Calu3 (cell line): ENCODE measurements at regions of chr6 and their contacts with region 1.

Region 1: DNA sequence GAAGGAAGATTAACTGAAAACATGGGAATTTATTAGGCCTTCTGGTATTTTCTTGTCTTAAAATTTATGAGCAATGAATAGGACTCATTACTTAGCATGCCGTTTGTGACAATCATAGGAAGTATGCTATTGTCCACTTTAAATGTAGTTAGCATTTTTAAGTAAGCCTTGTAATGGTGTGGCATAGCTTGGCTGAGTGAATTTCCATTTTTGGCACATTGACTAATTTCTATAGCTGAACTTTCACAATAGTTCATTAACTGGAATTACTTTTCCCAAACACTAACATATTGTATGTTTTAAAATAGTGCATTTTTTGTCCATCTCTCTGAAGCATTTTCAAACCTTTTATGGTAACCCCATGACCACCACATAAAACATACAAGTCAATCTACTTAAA is 15.7 kb downstream of the RSPO3 start:
- DNase-seq: no peak
- H3K4me3 Mint-ChIP-seq: no peak overlapping the region
- H3K27ac Mint-ChIP-seq: no peak overlapping the region
- H3K4me1 Mint-ChIP-seq: no peaks in the 10 kb centered on the region
- H3K27me3 Mint-ChIP-seq: peaks cover 2% of the 10 kb centered on the region
- CTCF ChIP-seq: no peak

Region 2: GRCh38 chr6:126682433-126682832 is 451.7 kb before region 1 on chr6:
- CTCF ChIA-PET with region 1: no interaction called
- intact Hi-C with region 1: no loop called
- DNase-seq: no peak
- H3K4me3 Mint-ChIP-seq: no peak overlapping the region
- H3K27ac Mint-ChIP-seq: no peak overlapping the region
- H3K4me1 Mint-ChIP-seq: no peaks in the 10 kb centered on the region
- H3K27me3 Mint-ChIP-seq: no peaks in the 10 kb centered on the region
- CTCF ChIP-seq: no peak

Region 3: GRCh38 chr6:126812651-126813050 is 321.5 kb before region 1 on chr6:
- CTCF ChIA-PET with region 1: no interaction called
- intact Hi-C with region 1: no loop called
- DNase-seq: no peak
- H3K4me3 Mint-ChIP-seq: no peak overlapping the region
- H3K27ac Mint-ChIP-seq: peak overlapping the region; percentile 2
- H3K4me1 Mint-ChIP-seq: peaks cover 8% of the 10 kb centered on the region
- H3K27me3 Mint-ChIP-seq: no peaks in the 10 kb centered on the region
- CTCF ChIP-seq: no peak

Region 4: GRCh38 chr6:127120787-127121636 is 13.1 kb before region 1 on chr6:
- CTCF ChIA-PET with region 1: no interaction called
- intact Hi-C with region 1: no loop called
- DNase-seq: peak; percentile 85
- H3K4me3 Mint-ChIP-seq: peak overlapping the region; percentile 74
- H3K27ac Mint-ChIP-seq: no peak overlapping the region
- H3K4me1 Mint-ChIP-seq: peaks cover 20% of the 10 kb centered on the region
- H3K27me3 Mint-ChIP-seq: peaks cover 42% of the 10 kb centered on the region
- CTCF ChIP-seq: peak; percentile 79

Region 5: GRCh38 chr6:127146932-127147331 is 12.8 kb after region 1 on chr6:
- CTCF ChIA-PET with region 1: no interaction called
- intact Hi-C with region 1: loop called (anchors 1 kb)
- DNase-seq: no peak
- H3K4me3 Mint-ChIP-seq: no peak overlapping the region
- H3K27ac Mint-ChIP-seq: no peak overlapping the region
- H3K4me1 Mint-ChIP-seq: no peaks in the 10 kb centered on the region
- H3K27me3 Mint-ChIP-seq: no peaks in the 10 kb centered on the region
- CTCF ChIP-seq: no peak